GM13976 (cell line): ENCODE measurements at regions of chr1 and their contacts with region 1.

Region 1: DNA sequence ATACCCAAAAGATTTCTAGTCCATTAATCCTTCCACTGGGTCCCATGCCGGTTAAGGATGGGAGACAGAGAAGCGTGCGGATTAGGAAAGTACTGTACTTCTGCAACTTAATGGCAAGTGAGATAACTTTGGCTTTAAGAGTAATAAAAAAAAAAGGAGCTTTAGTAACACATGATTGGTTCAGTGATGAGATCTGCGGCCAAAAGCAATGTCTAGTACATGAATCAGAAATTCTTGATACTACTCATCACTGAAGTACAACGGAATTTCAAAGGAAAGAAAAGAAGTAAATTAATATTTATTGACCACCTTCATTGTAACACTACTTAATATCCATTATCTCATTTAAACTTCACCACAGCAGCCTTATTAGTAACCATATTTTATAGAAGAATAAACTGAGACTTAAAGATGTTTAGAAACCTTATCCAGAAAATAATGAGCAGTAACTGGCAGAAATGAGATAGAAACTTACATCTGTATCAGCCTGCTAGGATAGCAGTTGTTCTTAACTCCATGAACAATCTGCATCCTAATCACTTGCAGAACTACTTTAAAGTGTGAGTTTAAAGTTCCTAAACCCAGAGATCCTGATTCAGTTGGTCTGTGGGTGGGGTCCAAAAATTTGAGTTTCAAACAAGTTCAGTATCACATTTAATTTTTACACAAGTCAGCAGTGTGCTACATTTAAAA is 14.1 kb upstream of the NUF2 start:
- DNase-seq: no peak
- CTCF ChIP-seq: no peak

Region 2: DNA sequence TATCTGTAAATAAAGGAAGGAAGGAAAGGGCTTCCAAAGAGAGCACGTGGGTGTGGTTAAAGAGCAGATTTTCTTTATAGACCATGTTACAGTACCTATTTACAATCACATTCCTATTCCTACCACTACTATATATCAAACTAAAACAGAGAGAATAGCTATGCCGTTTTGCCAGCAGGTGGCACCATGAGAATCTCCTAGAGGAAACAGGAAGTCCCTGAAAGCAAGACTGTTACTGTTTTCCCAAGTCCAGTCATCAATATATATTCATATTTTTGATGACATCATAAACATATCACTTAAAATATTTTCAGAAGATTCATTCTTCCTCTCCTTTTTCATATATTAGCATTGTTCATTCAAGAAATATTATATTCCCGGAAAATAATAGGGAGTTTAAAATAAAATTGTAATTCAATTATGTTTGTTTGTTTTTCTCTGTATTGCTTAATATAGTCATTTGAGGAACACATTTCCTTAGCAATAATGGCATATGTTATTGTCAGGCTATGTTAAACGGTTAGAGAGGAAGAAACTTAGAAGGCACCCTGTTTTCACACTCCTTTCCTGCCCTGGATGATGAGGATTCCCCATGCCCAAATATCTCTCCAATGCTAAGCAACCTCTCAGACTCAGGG is 453.3 kb before region 1 on chr1:
- in situ Hi-C with region 1: loop called (anchors 10 kb)
- DNase-seq: peak; percentile 66
- CTCF ChIP-seq: peak; percentile 68

Region 3: DNA sequence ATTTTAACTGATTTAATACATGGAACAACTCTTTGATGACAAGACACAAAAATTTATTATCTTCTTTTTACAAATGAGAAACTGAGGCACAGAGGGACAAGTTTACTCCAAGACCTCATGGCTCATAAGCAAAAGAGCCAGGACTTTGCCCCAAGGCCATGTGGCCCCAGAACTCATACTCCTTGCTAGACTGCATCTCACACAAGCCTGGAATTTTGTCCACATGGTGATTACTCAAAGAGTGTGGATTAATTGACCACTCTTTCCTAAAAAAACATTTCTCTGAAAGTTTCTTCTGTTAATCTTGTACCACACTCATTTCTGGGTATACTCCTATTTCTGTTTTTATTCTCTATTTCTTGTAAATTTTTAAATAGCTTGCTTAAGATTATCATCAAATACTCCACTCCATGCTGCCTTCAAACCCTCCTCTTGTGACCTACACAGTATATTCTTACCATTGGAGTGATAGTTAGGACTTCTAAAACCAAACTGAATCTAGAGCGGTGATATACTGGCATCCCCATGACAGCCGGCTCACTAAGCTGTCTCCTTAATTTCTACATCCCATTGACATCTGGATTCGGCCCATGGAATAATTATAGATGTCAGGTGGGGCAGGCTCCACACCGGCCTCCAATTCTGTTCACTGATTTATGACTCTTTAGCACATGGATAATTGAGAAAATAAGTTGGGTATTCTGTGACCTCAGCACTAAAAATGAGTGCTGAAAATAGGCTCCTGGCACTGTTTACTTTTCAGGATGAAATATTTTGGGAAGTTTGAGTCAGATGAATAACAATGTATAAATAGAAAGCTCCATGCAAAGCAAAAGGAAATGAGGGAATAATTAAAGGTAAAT is 222.4 kb before region 1 on chr1:
- in situ Hi-C with region 1: no loop called
- DNase-seq: no peak
- CTCF ChIP-seq: no peak

Region 4: GRCh38 chr1:163372576-163372975 is 65.0 kb after region 1 on chr1:
- in situ Hi-C with region 1: no loop called
- DNase-seq: no peak
- CTCF ChIP-seq: no peak